ENCODE measurements at regions of chr5 and their contacts with region 1.

Region 1: GRCh38 chr5:132064738-132065331 is 4.4 kb downstream of the IL3 start:
- DNase-seq: peak; percentile 61 to 76
- H3K4me3 ChIP-seq: no peak overlapping the region
- H3K27ac ChIP-seq: no peak overlapping the region
- H3K4me1 ChIP-seq: no peaks in the 10 kb centered on the region
- H3K27me3 ChIP-seq: no peaks in the 10 kb centered on the region
- CTCF ChIP-seq: peak; percentile 95

Region 2: DNA sequence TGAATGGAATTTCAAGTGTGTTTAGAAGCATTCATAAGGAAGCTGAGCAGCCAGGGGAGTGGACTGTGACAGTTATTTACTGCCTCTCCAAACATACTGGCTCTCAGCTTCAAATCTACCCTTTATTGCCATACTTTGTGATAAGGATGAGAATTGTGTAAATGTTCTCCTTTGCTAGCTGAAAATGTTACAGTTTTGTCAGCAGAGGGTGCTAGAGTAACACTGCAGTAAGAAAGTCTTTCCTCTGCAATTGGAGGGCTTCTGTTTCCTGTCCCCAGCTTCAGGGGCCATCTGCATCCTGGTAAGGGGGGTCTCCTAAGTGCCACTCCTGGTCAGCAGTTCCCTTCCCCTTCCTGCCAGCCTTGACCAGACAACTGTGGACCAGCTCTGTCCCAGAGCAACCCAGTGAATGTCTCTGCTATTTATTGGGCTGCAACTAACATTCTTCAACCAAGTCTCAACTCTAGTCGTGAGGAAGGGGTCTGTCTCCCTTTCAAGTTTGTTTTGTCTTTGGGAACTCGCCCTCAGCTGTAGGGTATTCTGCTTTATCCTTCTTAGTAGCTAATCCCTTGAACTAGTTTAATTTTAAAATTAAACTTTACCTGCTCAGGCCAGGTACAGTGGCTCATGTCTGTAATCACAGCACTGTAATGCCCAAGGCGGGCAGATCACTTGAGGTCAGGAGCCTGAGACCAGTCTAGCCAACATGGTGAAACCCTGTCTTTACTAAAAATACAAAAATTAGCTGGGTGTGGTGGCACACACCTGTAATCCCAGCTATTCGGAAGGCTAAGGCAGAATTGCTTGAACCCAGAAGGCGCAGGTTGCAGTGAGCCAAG is 475.1 kb before region 1 on chr5:
- CTCF ChIA-PET with region 1: interaction called, 5 read pairs
- POLR2A ChIA-PET with region 1: no interaction called
- intact Hi-C with region 1: loop called (anchors 1 kb)
- DNase-seq: peak in 1 of 2 experiments; percentile 13
- H3K4me3 ChIP-seq: no peak overlapping the region
- H3K27ac ChIP-seq: no peak overlapping the region
- H3K4me1 ChIP-seq: no peaks in the 10 kb centered on the region
- H3K27me3 ChIP-seq: no peaks in the 10 kb centered on the region
- CTCF ChIP-seq: peak; percentile 86

Region 3: GRCh38 chr5:132007399-132008165 is 57.3 kb before region 1 on chr5:
- CTCF ChIA-PET with region 1: no interaction called
- POLR2A ChIA-PET with region 1: no interaction called
- intact Hi-C with region 1: loop called (anchors 5 kb)
- DNase-seq: peak; percentile 54 to 64
- H3K4me3 ChIP-seq: no peak overlapping the region
- H3K27ac ChIP-seq: no peak overlapping the region
- H3K4me1 ChIP-seq: 0 out of 2 replicates have a peak, but pooled peaks cover under 1% of the 10 kb centered on the region
- H3K27me3 ChIP-seq: peaks cover 27% of the 10 kb centered on the region
- CTCF ChIP-seq: peak; percentile 79

Region 4: DNA sequence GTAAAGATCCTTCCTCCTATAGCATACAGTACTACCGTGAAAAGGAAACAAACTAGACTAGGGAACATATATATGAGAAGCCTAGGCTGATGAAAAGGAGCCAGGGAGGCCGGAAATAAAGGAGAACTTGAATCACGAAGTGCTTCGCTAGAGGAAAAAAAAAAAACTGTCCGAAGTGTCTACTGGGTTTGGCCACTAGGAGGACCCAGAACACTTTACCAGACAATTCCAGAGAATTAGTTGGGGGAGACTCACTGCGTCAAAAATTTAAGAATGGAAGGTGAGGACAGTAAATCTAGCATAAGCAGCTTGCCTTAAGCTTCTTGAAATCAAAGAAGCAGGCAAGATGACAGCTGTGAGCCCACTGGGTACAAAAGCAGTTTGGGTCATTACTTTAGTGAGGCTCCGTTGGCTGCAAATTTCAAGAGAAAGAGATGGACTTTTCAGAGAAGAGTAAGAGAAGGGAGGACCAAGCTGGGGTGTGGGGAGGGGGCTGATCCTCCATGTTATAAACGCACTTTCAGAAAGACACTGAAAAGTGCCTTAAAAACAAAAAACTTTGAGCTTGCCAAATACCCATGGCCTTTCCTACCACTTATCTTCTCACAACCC is 115.4 kb after region 1 on chr5:
- CTCF ChIA-PET with region 1: interaction called, 3 read pairs
- POLR2A ChIA-PET with region 1: no interaction called
- intact Hi-C with region 1: loop called (anchors 1 kb)
- DNase-seq: peak; percentile 43 to 46
- H3K4me3 ChIP-seq: no peak overlapping the region
- H3K27ac ChIP-seq: no peak overlapping the region
- H3K4me1 ChIP-seq: no peaks in the 10 kb centered on the region
- H3K27me3 ChIP-seq: no peaks in the 10 kb centered on the region
- CTCF ChIP-seq: peak; percentile 82

Region 5: GRCh38 chr5:132215329-132215728 is 150.5 kb after region 1 on chr5:
- CTCF ChIA-PET with region 1: no interaction called
- POLR2A ChIA-PET with region 1: no interaction called
- intact Hi-C with region 1: no loop called
- DNase-seq: peak; percentile 67 to 85
- H3K4me3 ChIP-seq: no peak overlapping the region
- H3K27ac ChIP-seq: no peak overlapping the region
- H3K4me1 ChIP-seq: no peaks in the 10 kb centered on the region
- H3K27me3 ChIP-seq: no peaks in the 10 kb centered on the region
- CTCF ChIP-seq: no peak

Region 6: GRCh38 chr5:132500931-132501630 is 436.2 kb after region 1 on chr5:
- CTCF ChIA-PET with region 1: no interaction called
- POLR2A ChIA-PET with region 1: no interaction called
- intact Hi-C with region 1: loop called (anchors 2 kb)
- DNase-seq: peak in 1 of 2 experiments; percentile 45
- H3K4me3 ChIP-seq: no peak overlapping the region
- H3K27ac ChIP-seq: no peak overlapping the region
- H3K4me1 ChIP-seq: peaks cover 46% of the 10 kb centered on the region
- H3K27me3 ChIP-seq: no peaks in the 10 kb centered on the region
- CTCF ChIP-seq: peak; percentile 89

Region 7: DNA sequence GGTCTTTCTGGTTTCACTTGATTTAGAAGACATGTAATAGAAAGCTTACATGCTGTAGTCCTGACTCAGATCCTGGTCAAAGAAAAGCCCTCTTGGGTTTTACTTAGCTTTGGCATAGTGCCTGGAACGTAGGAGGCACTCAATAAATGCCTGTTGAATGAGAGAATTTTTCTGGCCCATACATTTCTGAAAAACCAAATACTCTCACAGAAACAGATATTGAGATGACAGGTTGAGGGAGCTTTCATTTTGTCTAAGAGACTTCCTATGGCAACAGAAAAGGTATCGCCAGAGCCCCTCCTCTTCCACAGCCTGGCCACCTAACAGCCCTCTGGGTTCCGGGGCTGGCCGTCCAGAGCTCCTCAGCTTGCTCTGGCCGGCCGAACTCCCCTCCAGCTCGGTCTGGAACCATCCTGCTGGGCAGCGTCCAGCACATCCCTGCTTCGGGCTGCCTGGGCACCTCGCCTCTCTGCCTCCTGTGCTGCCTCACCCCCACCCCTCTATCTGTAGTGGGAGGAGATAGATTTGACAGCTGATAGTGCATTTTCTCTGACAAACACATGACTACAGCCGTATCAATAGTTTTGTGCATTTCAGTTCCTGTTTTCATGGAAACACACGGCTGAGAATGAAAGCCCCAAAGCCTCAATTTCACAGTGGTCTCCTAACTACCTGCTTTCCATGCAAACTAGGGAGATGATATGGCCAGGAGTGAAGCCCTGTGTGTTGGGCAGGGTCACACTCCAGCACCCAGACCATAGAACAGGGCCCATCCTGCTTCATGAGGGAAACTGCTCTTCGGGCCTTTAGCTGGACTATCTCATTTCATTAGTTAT is 610.1 kb after region 1 on chr5:
- CTCF ChIA-PET with region 1: no interaction called
- POLR2A ChIA-PET with region 1: no interaction called
- intact Hi-C with region 1: loop called (anchors 2 kb)
- DNase-seq: peak; percentile 42 to 81
- H3K4me3 ChIP-seq: no peak overlapping the region
- H3K27ac ChIP-seq: no peak overlapping the region
- H3K4me1 ChIP-seq: peaks cover 11% of the 10 kb centered on the region
- H3K27me3 ChIP-seq: no peaks in the 10 kb centered on the region
- CTCF ChIP-seq: no peak

Region 8: GRCh38 chr5:132866342-132867045 is 801.7 kb after region 1 on chr5 and contains the starts of genes GDF9 and UQCRQ:
- CTCF ChIA-PET with region 1: no interaction called
- POLR2A ChIA-PET with region 1: no interaction called
- intact Hi-C with region 1: loop called (anchors 10 kb)
- DNase-seq: peak; percentile 96 to 97
- H3K4me3 ChIP-seq: peak within 1 kb of the TSS; percentile 76
- H3K27ac ChIP-seq: peak within 1 kb of the TSS; percentile 69
- H3K4me1 ChIP-seq: peaks cover 18% of the 10 kb centered on the region
- H3K27me3 ChIP-seq: no peaks in the 10 kb centered on the region
- CTCF ChIP-seq: peak; percentile 36; the same call in 1 of the 2 replicates
- total RNA-seq, gene GDF9: 0.73 and 1.4 TPM in 2 replicates
- total RNA-seq, gene UQCRQ: 414 and 446 TPM in 2 replicates

Measured in PC-9 (cell line).